Ascending aorta (tissue), 2 donors: ENCODE measurements at regions of chr11 and their contacts with region 1.

Region 1: DNA sequence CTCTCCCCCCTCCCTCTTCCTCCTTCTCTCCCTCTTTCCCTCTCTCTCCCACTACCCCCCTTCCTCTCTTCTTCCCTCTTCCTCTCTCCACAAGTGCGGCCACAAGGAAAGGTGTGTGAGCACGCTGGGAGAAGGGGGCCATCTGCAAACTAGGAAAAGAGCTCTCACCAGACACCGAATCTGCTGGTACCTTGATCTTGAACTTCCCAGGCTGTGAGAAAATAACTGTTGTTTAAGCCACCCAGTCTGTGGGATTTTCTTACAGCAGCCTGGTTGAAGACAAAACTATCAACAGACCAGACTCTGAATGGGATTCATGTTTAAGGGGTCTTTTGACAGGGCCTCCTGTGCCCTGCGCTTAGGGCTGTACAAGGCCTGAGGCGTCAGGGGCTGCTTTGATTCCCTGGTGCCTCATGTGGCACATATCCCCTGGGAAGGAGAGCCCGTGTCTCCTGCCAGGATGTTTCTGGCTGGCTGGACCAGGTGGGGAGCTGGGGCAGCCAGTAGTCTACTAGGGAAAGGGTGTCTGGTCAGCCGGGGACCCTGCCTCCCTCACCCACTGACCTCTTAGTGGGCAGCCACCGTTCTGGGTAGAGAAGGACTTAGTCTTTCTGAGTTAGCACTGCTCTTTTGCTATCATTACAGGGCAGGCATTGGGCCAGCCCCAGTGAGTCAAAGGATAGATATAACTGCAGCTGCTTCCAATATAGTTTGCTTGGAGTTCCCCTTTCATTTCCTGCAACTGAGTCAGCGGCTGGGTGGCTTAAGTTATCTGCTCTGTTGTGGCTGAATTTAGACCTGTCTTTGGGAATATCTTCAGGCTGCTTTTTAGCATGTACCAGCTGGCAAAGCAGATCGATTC is 6.2 kb downstream of the PANX1 start:
- DNase-seq: peak; percentile 71 to 94
- H3K4me3 ChIP-seq: peak overlapping the region; percentile 18 to 43
- H3K27ac ChIP-seq: peak overlapping the region; percentile 90 to 96
- H3K4me1 ChIP-seq: peaks cover 6 to 50% of the 10 kb centered on the region in 2 donors
- H3K27me3 ChIP-seq: no peaks in the 10 kb centered on the region
- CTCF ChIP-seq: no peak

Region 2: GRCh38 chr11:94120946-94121345 is 13.9 kb before region 1 on chr11:
- intact Hi-C with region 1: no loop called
- DNase-seq: no peak
- H3K4me3 ChIP-seq: no peak overlapping the region
- H3K27ac ChIP-seq: no peak overlapping the region
- H3K4me1 ChIP-seq: peaks cover 0 to 7% of the 10 kb centered on the region in 2 donors
- H3K27me3 ChIP-seq: no peaks in the 10 kb centered on the region
- CTCF ChIP-seq: no peak

Region 3: GRCh38 chr11:94151903-94152677 is 17.2 kb after region 1 on chr11:
- intact Hi-C with region 1: loop called (anchors 2 kb)
- DNase-seq: peak; percentile 28 to 80
- H3K4me3 ChIP-seq: no peak overlapping the region
- H3K27ac ChIP-seq: peak overlapping the region; percentile 70 to 84
- H3K4me1 ChIP-seq: peaks cover 22 to 46% of the 10 kb centered on the region in 2 donors
- H3K27me3 ChIP-seq: no peaks in the 10 kb centered on the region
- CTCF ChIP-seq: no peak

Region 4: GRCh38 chr11:94543695-94544645 is 409.1 kb after region 1 on chr11 and contains the start of gene FUT4:
- intact Hi-C with region 1: loop called (anchors 5 kb)
- DNase-seq: peak; percentile 44 to 90
- H3K4me3 ChIP-seq: peak within 1 kb of the TSS; percentile 81 to 93
- H3K27ac ChIP-seq: peak within 1 kb of the TSS; percentile 97 to 100
- H3K4me1 ChIP-seq: peaks cover 7 to 14% of the 10 kb centered on the region in 2 donors
- H3K27me3 ChIP-seq: no peaks in the 10 kb centered on the region
- CTCF ChIP-seq: no peak
- total RNA-seq, gene FUT4: 3.2 TPM